Activated CD4-positive, alpha-beta memory T cell treated with anti-CD3 and anti-CD28 coated beads, Interleukin-2, amount 10 ng/mL, durations not matched to agents 7 days and 5 days (primary cell): ENCODE measurements at regions of chr12 and their contacts with region 1.

Region 1: GRCh38 chr12:120194534-120195395 is at the start of gene GCN1:
- DNase-seq: peak; percentile 89
- H3K4me3 Mint-ChIP-seq: peak within 1 kb of the TSS; percentile 87
- H3K27ac Mint-ChIP-seq: peak within 1 kb of the TSS; percentile 98
- H3K4me1 Mint-ChIP-seq: peaks cover 65% of the 10 kb centered on the region
- H3K27me3 Mint-ChIP-seq: no peaks in the 10 kb centered on the region
- total RNA-seq, gene GCN1: 86.0 to 94.3 TPM

Region 2: DNA sequence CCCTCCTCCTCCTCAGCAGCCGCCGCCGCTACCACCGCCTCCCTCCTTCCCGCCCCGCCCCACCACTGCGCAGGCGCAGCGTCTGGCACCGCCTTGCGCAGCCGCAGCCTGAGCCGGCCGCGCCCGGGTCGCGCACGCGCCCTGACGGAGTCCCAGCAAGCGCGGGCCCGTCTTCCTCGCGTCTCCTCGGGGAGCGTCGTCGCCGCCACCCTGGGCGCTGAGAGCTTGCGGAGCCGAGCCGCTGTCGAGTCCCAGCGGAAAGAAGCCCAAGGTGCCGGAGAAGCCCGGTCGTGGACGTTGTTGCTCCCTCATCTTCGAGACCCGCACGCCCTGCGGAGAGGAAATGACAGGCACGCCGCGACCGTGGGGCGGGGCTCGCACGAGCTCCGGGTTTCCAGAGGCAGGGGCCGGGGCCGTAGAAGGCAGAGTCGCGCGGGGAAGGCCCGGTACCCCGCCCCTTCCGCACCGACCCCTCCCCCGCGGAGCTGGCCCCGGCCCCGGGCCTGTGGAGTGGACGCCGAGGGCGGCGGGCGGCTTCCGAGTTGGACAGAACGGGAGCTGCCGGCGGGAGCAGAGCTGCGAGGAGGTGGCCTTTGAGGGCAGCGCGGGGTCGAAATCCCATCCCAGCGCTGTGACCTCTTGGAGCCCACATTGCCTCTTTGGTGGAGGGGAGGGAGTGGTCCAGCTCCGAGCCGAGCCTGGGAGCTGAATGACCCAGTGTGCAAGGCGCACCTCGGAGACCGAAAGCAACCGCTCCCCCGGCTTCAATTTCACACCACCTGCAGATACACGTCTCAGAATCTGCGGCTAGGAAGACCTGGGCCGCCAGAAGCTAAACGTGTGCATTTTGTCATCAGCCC is 77.7 kb before region 1 on chr12:
- CTCF ChIA-PET with region 1: interaction called, 3 read pairs
- POLR2A ChIA-PET with region 1: interaction called, 236 read pairs
- DNase-seq: peak; percentile 98
- H3K4me3 Mint-ChIP-seq: peak overlapping the region; percentile 89
- H3K27ac Mint-ChIP-seq: peak overlapping the region; percentile 80
- H3K4me1 Mint-ChIP-seq: peaks cover 76% of the 10 kb centered on the region
- H3K27me3 Mint-ChIP-seq: no peaks in the 10 kb centered on the region

Region 3: DNA sequence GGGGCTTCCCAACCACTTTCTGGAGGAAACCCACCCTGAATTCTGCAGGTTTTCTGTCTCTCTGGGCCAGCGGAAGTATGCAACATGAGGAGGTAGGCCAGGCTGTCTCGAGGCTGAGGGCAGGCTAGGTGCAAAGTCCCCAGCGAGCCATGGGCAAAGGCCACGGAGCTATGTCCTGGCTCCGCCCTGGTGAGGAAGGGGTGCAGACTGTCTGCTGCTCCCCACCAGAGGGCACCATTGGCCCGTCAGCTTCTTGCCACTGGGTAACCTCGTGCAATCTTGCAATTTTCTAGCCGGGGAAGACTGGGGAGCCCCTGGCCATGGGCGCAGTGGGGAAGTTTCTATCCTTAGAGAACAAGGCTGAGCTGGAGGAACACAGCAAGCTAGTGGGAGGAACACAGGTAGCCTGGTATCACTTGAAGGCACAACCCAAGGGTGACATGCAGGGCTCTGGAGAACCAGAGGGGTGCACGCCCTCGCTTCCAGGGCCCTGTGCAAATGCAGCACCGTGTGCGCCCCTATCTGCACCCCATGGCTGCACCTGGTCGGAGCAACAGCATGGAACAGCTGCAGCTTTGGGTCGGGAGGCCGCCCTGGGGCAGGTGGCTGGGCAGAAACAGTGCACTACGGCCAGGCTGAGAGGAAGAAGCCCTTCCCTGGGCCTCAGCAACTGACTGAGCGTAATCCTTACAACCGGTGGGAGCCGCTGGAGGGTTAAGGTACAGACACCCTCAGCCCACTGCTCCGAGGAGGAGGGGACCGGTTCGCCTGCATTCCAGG is 33.7 kb after region 1 on chr12:
- CTCF ChIA-PET with region 1: interaction called, 7 read pairs
- POLR2A ChIA-PET with region 1: interaction called, 159 read pairs
- DNase-seq: peak; percentile 91
- H3K4me3 Mint-ChIP-seq: peak overlapping the region; percentile 47
- H3K27ac Mint-ChIP-seq: peak overlapping the region; percentile 77
- H3K4me1 Mint-ChIP-seq: peaks cover 85% of the 10 kb centered on the region
- H3K27me3 Mint-ChIP-seq: no peaks in the 10 kb centered on the region

Region 4: DNA sequence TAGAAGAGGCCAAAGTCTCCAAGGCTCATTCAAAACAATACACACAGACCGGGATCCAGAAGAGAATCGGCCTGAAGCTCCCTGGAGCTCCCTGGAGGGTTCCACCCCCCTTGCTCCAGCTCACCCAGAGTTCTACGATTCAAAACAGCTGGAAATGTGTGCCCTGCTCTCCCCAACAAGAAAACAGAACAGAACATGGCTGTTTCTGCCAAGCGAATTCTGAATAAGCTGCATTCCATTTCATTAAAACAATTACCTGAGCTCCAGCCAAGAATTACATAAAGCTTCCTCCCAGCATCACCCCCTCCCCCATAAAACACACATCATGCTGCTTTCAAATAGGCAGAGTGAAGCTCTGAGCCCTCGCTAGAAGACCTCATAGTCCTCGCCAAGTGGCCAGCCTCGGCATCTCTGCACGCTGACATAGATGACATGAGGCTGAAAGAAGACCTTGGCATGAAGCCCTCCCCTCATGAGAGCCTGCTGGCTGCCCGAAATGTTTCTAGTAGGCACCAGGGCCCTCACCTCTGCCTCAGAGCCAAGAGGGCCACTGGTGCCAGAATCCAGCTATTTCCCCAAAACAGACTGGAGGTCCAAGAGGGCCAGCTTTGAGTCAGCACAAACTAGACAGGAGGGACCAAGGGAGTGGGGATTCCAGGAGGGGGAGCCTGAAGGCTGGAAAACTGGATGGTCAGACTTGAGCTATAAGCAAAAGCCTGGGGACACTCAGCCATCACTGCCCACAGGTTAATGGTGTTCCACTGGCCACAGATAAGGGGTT is 62.5 kb after region 1 on chr12:
- CTCF ChIA-PET with region 1: interaction called, 14 read pairs
- POLR2A ChIA-PET with region 1: interaction called, 168 read pairs
- DNase-seq: no peak
- H3K4me3 Mint-ChIP-seq: no peak overlapping the region
- H3K27ac Mint-ChIP-seq: peak overlapping the region; percentile 67
- H3K4me1 Mint-ChIP-seq: peaks cover 91% of the 10 kb centered on the region
- H3K27me3 Mint-ChIP-seq: no peaks in the 10 kb centered on the region

Region 5: DNA sequence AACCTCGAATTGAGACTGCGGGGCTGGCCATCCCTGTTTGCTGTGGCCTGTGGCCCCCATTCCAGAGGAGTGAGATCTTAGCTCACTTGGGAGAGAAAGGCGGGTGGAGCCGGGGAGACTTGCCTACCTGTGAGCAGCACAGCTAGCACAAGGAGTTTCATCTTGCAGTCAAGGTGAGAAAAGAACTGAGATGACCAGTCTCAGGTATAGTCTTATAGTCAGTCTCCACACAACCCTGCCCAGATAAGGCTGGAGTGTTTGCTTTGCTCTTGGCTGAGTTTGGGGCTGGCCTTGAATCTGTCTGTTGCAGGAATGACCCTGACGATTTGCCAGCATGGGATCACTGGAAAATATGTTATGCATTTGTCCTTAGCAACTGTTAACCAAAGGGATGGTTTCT is 132.8 kb after region 1 on chr12 and contains the start of gene PLA2G1B:
- CTCF ChIA-PET with region 1: no interaction called
- POLR2A ChIA-PET with region 1: no interaction called
- DNase-seq: no peak
- H3K4me3 Mint-ChIP-seq: no peak within 1 kb of the TSS
- H3K27ac Mint-ChIP-seq: no peak within 1 kb of the TSS
- H3K4me1 Mint-ChIP-seq: peaks cover 7% of the 10 kb centered on the region
- H3K27me3 Mint-ChIP-seq: peaks cover 3% of the 10 kb centered on the region
- total RNA-seq, gene PLA2G1B: not detected